Posterior cingulate gyrus (tissue), 11 donors: ENCODE measurements at regions of chr4 and their contacts with region 1.

Region 1: GRCh38 chr4:26235500-26235899 is 85.3 kb upstream of the RBPJ start:
- DNase-seq: peak in 5 of 10 donors; percentile 14 to 69 (median 47)

Region 2: DNA sequence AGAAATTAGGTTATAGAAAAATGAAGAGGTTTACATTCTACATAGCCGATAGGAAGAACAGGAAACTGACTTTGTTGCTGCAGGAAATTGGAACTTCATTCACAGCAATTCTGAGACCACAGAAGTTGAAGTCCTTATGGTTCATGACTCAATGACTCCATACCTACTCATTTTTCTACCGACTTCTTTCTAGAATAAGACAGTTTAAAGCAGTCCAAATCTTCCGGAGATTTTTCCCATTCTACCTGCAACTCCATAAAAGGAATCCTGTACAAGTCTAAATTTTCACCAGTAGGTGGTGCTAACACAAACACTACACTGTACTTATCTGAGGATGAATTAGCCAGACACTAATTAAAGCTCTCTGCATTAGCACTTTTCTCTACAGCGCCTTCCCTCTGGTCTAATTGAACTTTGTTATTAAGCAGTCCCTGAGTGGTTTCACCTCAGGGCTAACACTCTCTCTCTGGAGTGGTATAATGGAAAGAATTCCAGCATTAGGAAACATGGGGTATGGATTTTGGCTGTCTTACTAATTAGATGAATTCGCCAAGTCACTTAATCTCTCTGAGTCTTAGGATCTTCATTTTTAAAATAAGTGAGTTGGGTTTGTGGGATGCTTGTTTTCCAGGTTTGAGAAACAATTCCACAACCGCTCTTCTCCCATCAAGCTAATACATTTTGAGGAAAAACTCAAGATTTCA is 153.6 kb before region 1 on chr4:
- intact Hi-C with region 1: loop called (anchors 10 kb)
- DNase-seq: no peak

Region 3: DNA sequence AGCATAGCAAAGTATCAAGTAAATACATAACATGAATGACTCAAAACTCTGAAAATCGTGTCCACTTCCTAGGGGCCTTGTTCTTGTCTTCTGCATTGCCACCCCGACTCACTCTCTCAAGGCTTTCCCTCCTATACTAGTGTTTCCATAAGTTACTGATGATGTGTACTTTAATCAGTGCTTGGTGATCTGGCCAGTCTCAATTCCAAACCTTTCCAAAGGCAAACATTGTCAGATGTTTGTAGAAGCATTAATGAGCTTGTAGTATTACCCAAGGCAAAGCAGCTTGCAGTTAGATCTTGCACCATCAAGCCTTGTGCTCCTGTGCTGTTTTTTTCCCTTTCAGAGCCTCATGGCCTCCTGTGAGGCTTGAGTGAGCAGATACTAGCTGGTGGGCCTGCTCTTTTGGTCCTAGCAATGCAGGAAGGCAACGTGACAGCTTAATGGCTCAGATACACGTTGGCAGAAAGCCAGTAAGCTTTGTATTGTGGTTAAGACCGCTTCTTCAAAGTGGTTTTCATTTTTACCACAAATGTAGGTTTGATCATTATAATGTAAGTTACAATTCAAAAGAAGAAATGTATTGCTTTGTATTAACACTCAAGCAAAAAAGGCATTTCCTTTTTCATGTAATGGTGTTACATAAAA is 137.1 kb after region 1 on chr4:
- intact Hi-C with region 1: no loop called
- DNase-seq: no peak